AG04450 (cell line): ENCODE measurements at regions of chr6 and their contacts with region 1.

Region 1: GRCh38 chr6:17803409-17803808 is 96.7 kb upstream of the NUP153 start:
- DNase-seq: no peak
- H3K4me3 ChIP-seq: no peak overlapping the region
- H3K27ac ChIP-seq: no peak overlapping the region
- H3K27me3 ChIP-seq: no peaks in the 10 kb centered on the region
- CTCF ChIP-seq: no peak

Region 2: GRCh38 chr6:17156112-17156921 is 647.1 kb before region 1 on chr6:
- CTCF ChIA-PET with region 1: interaction called, 10 read pairs
- POLR2A ChIA-PET with region 1: no interaction called
- DNase-seq: peak; percentile 69
- H3K4me3 ChIP-seq: no peak overlapping the region
- H3K27ac ChIP-seq: no peak overlapping the region
- H3K27me3 ChIP-seq: peaks cover 2% of the 10 kb centered on the region
- CTCF ChIP-seq: peak; percentile 74

Region 3: DNA sequence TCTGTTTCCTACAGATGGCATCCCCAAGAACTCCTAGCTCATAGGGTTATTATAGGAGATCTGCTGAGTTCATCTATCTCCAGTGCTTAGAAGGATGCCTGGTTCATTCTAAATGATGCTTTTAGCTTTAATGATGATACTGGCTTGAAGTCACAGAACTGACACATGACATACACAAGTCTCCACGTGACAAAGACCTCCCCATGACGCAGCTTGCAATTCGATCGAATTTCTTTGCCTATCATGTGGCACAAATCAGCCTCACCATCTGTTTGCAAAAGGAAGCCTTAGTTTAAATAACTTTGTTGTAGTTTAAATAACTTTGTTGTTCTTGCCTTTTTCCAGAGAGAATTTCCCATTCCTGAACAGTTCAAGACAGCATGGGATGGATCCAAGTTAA is 247.4 kb before region 1 on chr6:
- CTCF ChIA-PET with region 1: no interaction called
- POLR2A ChIA-PET with region 1: no interaction called
- DNase-seq: no peak
- H3K4me3 ChIP-seq: no peak overlapping the region
- H3K27ac ChIP-seq: no peak overlapping the region
- H3K27me3 ChIP-seq: no peaks in the 10 kb centered on the region
- CTCF ChIP-seq: no peak

Region 4: GRCh38 chr6:17628873-17629272 is 174.5 kb before region 1 on chr6:
- CTCF ChIA-PET with region 1: interaction called, 12 read pairs
- POLR2A ChIA-PET with region 1: no interaction called
- DNase-seq: no peak
- H3K4me3 ChIP-seq: no peak overlapping the region
- H3K27ac ChIP-seq: no peak overlapping the region
- H3K27me3 ChIP-seq: no peaks in the 10 kb centered on the region
- CTCF ChIP-seq: no peak

Region 5: GRCh38 chr6:17790489-17790888 is 12.9 kb before region 1 on chr6:
- CTCF ChIA-PET with region 1: interaction called, 12 read pairs
- POLR2A ChIA-PET with region 1: no interaction called
- DNase-seq: no peak
- H3K4me3 ChIP-seq: no peak overlapping the region
- H3K27ac ChIP-seq: no peak overlapping the region
- H3K27me3 ChIP-seq: no peaks in the 10 kb centered on the region
- CTCF ChIP-seq: no peak

Region 6: GRCh38 chr6:17820055-17820454 is 16.6 kb after region 1 on chr6:
- CTCF ChIA-PET with region 1: interaction called, 53 read pairs
- POLR2A ChIA-PET with region 1: no interaction called
- DNase-seq: no peak
- H3K4me3 ChIP-seq: no peak overlapping the region
- H3K27ac ChIP-seq: peak overlapping the region; percentile 3
- H3K27me3 ChIP-seq: no peaks in the 10 kb centered on the region
- CTCF ChIP-seq: no peak

Region 7: DNA sequence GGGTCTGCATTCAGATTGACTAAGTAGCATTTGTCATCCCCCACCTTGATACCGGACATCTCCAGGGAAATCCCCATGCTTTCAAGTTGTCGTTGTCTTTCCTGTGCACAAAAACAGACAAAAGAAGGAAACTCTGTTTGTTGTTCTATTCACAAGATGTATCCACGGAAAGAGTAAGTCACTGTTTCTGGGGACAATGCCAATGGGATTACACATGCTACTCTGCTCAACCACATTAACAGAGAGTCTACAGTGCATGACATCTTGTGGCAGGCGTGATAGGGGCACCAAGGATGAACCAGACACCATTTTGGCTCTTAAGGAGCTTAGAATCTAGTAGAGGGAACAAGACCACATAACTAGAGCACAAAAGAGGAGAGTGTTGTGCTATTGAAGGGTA is 27.7 kb after region 1 on chr6:
- CTCF ChIA-PET with region 1: no interaction called
- POLR2A ChIA-PET with region 1: no interaction called
- DNase-seq: no peak
- H3K4me3 ChIP-seq: no peak overlapping the region
- H3K27ac ChIP-seq: no peak overlapping the region
- H3K27me3 ChIP-seq: no peaks in the 10 kb centered on the region
- CTCF ChIP-seq: no peak

Region 8: DNA sequence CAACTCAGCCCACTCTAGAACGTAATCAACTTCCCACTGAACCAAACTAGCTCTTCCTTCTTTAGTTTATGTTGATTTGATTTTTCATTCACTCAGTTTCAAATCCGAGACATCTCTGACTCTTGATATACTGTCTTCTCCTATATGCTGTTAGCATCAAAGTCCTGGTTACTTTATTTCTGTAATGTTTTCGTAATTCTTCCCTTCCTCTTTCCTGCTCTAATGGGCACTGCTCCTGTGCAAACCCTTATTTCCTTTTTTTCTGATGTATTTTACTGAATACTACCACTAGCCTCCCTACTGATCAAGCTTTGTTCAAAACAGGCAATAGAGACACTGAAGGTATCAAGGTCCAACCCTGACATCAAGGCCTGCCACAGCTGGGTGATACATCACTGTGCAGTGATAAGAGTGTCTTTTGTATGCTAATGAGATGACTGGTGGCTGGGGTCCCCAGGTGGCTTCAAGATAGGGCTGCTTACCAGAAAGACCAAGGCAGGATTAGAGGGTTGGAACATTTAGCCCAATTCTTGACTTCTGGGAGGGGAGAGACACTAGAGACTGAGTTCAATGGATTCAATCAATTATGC is 88.8 kb after region 1 on chr6:
- CTCF ChIA-PET with region 1: no interaction called
- POLR2A ChIA-PET with region 1: no interaction called
- DNase-seq: no peak
- H3K4me3 ChIP-seq: no peak overlapping the region
- H3K27ac ChIP-seq: no peak overlapping the region
- H3K27me3 ChIP-seq: no peaks in the 10 kb centered on the region
- CTCF ChIP-seq: no peak

Region 9: GRCh38 chr6:17962436-17963031 is 159.1 kb after region 1 on chr6:
- CTCF ChIA-PET with region 1: no interaction called
- POLR2A ChIA-PET with region 1: no interaction called
- DNase-seq: peak; percentile 91
- H3K4me3 ChIP-seq: peak overlapping the region; percentile 29
- H3K27ac ChIP-seq: peak overlapping the region; percentile 33
- H3K27me3 ChIP-seq: no peaks in the 10 kb centered on the region
- CTCF ChIP-seq: no peak